Panc1 (cell line): ENCODE measurements at regions of chr1 and their contacts with region 1.

Region 1: DNA sequence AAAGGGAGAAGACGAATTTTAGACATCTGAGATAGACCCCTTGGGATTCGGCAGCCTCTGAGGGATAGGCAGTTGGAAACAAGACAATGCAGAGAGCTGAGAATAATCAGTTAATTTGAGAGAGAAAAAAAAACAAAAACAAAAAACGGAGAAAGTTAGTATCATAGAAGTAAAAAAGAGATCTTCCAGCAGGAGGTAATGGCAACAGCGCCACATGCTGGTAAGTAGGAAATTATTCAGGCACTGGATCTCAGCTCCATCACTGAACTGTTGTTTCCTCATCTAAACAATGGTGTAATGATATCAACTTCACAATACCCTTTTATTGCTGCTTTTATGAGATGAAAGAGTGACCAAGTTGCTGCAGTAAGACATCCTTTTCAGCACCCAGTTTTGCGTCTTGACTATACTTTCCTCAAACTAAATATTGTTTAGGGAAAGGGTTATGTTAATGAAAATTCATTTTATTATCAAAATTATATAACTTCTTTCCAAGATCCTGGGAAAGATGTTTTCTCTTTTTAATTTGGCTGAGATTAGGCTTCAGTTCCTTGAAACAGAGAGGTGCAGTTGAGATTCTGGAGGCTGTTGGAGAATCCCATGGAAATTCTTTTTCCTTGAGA is 91.4 kb upstream of the KCNA3 start:
- DNase-seq: no peak
- ATAC-seq: no peak
- H3K4me3 ChIP-seq: no peak overlapping the region
- H3K27ac ChIP-seq: no peak overlapping the region
- H3K4me1 ChIP-seq: no peaks in the 10 kb centered on the region
- H3K27me3 ChIP-seq: peaks cover 4% of the 10 kb centered on the region; the same call in 1 of the 2 replicates
- CTCF ChIP-seq: peak; percentile 72

Region 2: GRCh38 chr1:110648417-110648816 is 117.7 kb before region 1 on chr1:
- CTCF ChIA-PET with region 1: no interaction called
- POLR2A ChIA-PET with region 1: interaction called, 13 read pairs
- in situ Hi-C with region 1: no loop called
- intact Hi-C with region 1: no loop called
- DNase-seq: no peak
- ATAC-seq: no peak
- H3K4me3 ChIP-seq: no peak overlapping the region
- H3K27ac ChIP-seq: no peak overlapping the region
- H3K4me1 ChIP-seq: no peaks in the 10 kb centered on the region
- H3K27me3 ChIP-seq: peaks cover 15% of the 10 kb centered on the region
- CTCF ChIP-seq: no peak